ENCODE measurements at regions of chr7 and their contacts with region 1.

Region 1: GRCh38 chr7:116173051-116174028 is 37.0 kb upstream of the TES start:
- DNase-seq: no peak
- H3K4me3 Mint-ChIP-seq: no peak overlapping the region
- H3K27ac Mint-ChIP-seq: no peak overlapping the region
- H3K4me1 Mint-ChIP-seq: peaks cover 7% of the 10 kb centered on the region
- H3K27me3 Mint-ChIP-seq: peaks cover 27% of the 10 kb centered on the region

Region 2: DNA sequence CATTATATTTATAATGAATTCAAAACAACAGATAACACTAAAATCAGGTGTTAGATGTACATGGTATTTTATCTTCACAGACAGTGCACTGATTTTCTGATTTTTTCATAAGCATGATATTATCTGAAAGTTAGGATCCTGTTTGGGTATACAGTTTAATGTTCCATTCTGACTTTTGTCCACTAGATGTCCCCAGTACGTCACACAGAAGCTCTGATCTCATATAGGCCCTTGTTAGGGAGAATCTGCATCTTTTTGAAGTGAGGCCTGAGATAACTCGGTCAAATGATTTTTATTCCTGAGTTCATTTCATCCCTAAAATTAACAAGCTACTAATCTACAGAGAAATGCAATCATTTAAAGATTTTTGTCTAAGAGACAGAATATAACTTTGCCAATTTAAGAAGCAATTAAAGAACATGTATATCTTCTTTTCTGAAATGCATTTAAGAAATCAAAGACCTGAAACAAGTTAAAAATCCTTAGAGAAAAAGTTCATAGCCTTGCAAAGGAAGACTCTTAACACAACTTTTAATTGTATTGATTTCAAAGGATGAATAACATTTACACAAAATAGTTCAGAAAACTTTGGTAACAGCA is 35.0 kb before region 1 on chr7:
- CTCF ChIA-PET with region 1: interaction called, 12 read pairs
- POLR2A ChIA-PET with region 1: no interaction called
- DNase-seq: no peak
- H3K4me3 Mint-ChIP-seq: no peak overlapping the region
- H3K27ac Mint-ChIP-seq: no peak overlapping the region
- H3K4me1 Mint-ChIP-seq: peaks cover 15% of the 10 kb centered on the region
- H3K27me3 Mint-ChIP-seq: peaks cover 15% of the 10 kb centered on the region